Activated CD4-positive, alpha-beta memory T cell treated with anti-CD3 and anti-CD28 coated beads, Interleukin-2, amount 10 ng/mL, durations not matched to agents 7 days and 5 days (primary cell): ENCODE measurements at regions of chr4 and their contacts with region 1.

Region 1: GRCh38 chr4:109433205-109434006 is at the start of gene SEC24B:
- DNase-seq: peak; percentile 91
- H3K4me3 Mint-ChIP-seq: peak within 1 kb of the TSS; percentile 84
- H3K27ac Mint-ChIP-seq: peak within 1 kb of the TSS; percentile 83
- H3K4me1 Mint-ChIP-seq: peaks cover 57% of the 10 kb centered on the region
- H3K27me3 Mint-ChIP-seq: no peaks in the 10 kb centered on the region
- total RNA-seq, gene SEC24B: 25.7 to 27.0 TPM

Region 2: GRCh38 chr4:109263721-109264120 is 169.7 kb before region 1 on chr4:
- CTCF ChIA-PET with region 1: no interaction called
- POLR2A ChIA-PET with region 1: no interaction called
- DNase-seq: no peak
- H3K4me3 Mint-ChIP-seq: no peak overlapping the region
- H3K27ac Mint-ChIP-seq: no peak overlapping the region
- H3K4me1 Mint-ChIP-seq: no peaks in the 10 kb centered on the region
- H3K27me3 Mint-ChIP-seq: peaks cover 17% of the 10 kb centered on the region

Region 3: GRCh38 chr4:109444182-109444844 is 10.9 kb after region 1 on chr4:
- CTCF ChIA-PET with region 1: interaction called, 19 read pairs
- POLR2A ChIA-PET with region 1: interaction called, 4 read pairs
- DNase-seq: no peak
- H3K4me3 Mint-ChIP-seq: no peak overlapping the region
- H3K27ac Mint-ChIP-seq: no peak overlapping the region
- H3K4me1 Mint-ChIP-seq: peaks cover 32% of the 10 kb centered on the region
- H3K27me3 Mint-ChIP-seq: no peaks in the 10 kb centered on the region

Region 4: DNA sequence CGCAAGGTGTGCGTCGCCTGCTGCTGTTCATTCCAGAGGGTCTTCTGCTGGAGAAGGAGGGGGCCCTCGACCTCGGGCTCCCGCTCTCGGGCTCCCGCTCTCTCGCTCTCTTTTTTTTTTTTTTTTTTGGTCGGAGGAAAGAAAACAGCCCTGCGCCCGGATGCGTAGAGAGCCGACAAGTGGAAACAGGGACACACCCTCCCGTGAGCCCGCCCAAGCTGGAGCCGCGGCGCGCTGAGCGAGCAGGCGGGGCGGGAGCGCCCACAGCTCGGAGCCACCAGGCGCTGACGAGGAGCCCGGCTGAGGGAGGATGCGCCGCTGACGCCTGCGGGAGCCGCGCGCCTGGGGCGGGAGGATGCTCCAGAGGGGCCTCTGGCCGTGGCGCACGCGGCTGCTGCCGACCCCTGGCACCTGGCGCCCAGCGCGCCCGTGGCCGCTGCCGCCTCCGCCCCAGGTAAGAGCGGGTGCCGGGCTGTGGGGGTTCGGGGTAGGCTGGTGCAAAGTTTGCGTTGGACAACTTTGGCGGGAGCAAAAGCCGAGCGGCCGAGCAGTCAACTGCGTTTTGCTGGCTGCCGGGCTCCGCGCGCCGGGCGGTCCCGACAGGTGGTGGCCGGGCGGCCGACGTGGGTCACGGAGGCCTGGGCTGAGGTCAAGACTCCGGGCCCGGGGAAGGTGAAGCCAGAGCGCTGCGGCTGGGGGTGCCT is 126.7 kb after region 1 on chr4 and contains the start of gene MCUB:
- CTCF ChIA-PET with region 1: interaction called, 28 read pairs
- POLR2A ChIA-PET with region 1: interaction called, 53 read pairs
- DNase-seq: peak; percentile 95
- H3K4me3 Mint-ChIP-seq: peak within 1 kb of the TSS; percentile 92
- H3K27ac Mint-ChIP-seq: peak within 1 kb of the TSS; percentile 94
- H3K4me1 Mint-ChIP-seq: peaks cover 49% of the 10 kb centered on the region
- H3K27me3 Mint-ChIP-seq: no peaks in the 10 kb centered on the region
- total RNA-seq, gene MCUB: 90.6 to 96.9 TPM

Region 5: DNA sequence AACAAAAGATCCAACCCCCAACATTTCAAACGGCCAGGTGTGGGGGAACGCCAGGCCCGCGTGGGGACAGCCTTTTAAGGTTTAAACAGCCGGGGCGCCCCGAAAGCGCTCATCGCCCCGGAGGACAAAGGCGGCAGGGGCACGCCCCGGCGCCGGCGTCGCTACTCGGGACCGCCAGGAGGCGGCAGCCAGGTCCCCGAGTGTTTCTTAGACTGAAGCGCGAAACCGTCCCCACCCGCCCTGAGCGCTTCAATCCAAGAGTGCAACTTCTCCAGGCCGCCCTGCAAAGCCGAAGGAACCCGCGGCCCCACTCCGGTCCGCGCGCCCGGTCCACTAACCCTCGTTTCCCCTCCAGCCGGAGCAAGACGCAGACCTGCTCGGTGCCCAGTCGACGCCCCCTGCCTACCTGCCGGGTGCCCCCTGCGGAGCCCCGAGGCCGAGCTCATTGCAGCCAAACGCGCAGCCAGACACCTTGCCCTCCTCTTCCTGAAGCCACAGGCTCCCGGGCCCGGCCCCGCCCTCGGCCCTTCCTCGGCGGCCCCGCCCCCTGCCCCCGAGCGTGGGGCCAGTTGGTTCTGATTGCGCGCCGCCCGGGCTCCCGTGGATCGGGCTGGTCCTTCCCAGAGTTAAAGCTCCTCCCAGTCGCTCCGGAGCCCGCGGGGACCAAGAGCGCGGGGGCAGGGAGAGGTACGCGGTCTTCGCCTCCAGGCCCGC is 269.7 kb after region 1 on chr4 and contains the start of gene CASP6:
- CTCF ChIA-PET with region 1: interaction called, 33 read pairs
- POLR2A ChIA-PET with region 1: interaction called, 12 read pairs
- DNase-seq: peak; percentile 83
- H3K4me3 Mint-ChIP-seq: peak within 1 kb of the TSS; percentile 93
- H3K27ac Mint-ChIP-seq: peak within 1 kb of the TSS; percentile 87
- H3K4me1 Mint-ChIP-seq: peaks cover 38% of the 10 kb centered on the region
- H3K27me3 Mint-ChIP-seq: no peaks in the 10 kb centered on the region
- total RNA-seq, gene CASP6: 30.5 to 32.4 TPM

Region 6: GRCh38 chr4:109826719-109827118 is 393.3 kb after region 1 on chr4:
- CTCF ChIA-PET with region 1: interaction called, 14 read pairs
- POLR2A ChIA-PET with region 1: interaction called, 6 read pairs
- DNase-seq: no peak
- H3K4me3 Mint-ChIP-seq: no peak overlapping the region
- H3K27ac Mint-ChIP-seq: no peak overlapping the region
- H3K4me1 Mint-ChIP-seq: peaks cover 5% of the 10 kb centered on the region
- H3K27me3 Mint-ChIP-seq: no peaks in the 10 kb centered on the region